ENCODE measurements at regions of chr15 and their contacts with region 1.

Region 1: GRCh38 chr15:70672081-70672480 is 91.3 kb downstream of the UACA start:
- DNase-seq: no peak
- H3K4me3 ChIP-seq: no peak overlapping the region
- H3K27ac ChIP-seq: no peak overlapping the region
- H3K4me1 ChIP-seq: no peaks in the 10 kb centered on the region
- H3K27me3 ChIP-seq: no peaks in the 10 kb centered on the region
- CTCF ChIP-seq: no peak
- POLR2A ChIP-seq: no peak

Region 2: DNA sequence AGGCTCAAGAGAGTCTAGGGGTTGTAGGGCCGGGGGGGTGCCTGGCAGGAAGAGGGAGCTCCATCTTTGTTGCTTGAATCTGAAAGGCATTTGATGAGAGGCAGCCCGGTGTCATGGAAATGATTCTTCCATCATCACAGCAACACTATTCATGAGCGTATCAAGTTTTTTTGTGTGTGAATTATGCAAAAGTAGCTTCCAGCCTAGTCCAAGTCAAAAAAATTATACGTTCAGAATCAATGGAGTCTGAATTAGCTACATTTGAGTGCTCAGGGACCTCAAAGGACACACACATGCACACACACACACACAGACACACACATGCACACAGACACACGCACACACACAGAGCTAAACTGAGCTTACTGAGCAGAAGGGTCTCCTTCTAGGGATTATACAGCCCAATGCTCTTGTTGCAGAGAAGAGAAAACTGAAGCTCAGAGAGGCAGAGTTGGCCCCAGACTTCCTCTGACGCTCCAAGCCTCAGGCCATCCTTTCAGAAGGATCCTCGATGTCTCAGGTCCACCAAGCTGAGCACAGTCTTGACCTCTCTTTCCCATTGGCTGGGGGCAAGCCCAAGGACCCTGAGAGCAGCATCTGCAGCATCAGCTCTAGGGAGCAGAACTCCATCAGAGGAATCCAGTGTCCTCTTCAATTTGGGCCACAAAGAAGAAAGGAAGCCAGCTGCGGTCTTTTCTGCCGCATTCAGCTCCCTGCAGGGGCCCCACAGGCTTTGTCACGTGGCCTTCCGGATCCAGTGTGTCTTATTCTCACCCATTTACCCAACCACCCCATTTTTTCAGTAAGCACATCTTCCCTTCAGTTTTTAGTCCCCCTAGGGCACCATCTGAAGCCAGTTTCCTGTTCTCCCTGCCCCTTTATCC is 136.8 kb before region 1 on chr15:
- intact Hi-C with region 1: no loop called
- DNase-seq: no peak
- H3K4me3 ChIP-seq: no peak overlapping the region
- H3K27ac ChIP-seq: no peak overlapping the region
- H3K4me1 ChIP-seq: no peaks in the 10 kb centered on the region
- H3K27me3 ChIP-seq: no peaks in the 10 kb centered on the region
- CTCF ChIP-seq: no peak
- POLR2A ChIP-seq: no peak

Region 3: GRCh38 chr15:70810916-70811578 is 139.0 kb after region 1 on chr15:
- intact Hi-C with region 1: loop called (anchors 1 kb)
- DNase-seq: no peak
- H3K4me3 ChIP-seq: no peak overlapping the region
- H3K27ac ChIP-seq: no peak overlapping the region
- H3K4me1 ChIP-seq: peaks cover 0 to 3% of the 10 kb centered on the region in 2 donors
- H3K27me3 ChIP-seq: no peaks in the 10 kb centered on the region
- CTCF ChIP-seq: no peak
- POLR2A ChIP-seq: no peak

Region 4: GRCh38 chr15:70916531-70916930 is 244.4 kb after region 1 on chr15:
- intact Hi-C with region 1: no loop called
- DNase-seq: no peak
- H3K4me3 ChIP-seq: no peak overlapping the region
- H3K27ac ChIP-seq: no peak overlapping the region
- H3K4me1 ChIP-seq: no peaks in the 10 kb centered on the region
- H3K27me3 ChIP-seq: no peaks in the 10 kb centered on the region
- CTCF ChIP-seq: no peak
- POLR2A ChIP-seq: no peak

Measured in breast epithelium (tissue), 4 donors.